Activated naive CD4-positive, alpha-beta T cell treated with anti-CD3 and anti-CD28 coated beads for 36 hours (primary cell): ENCODE measurements at regions of chr15 and their contacts with region 1.

Region 1: GRCh38 chr15:40108855-40109735 is at the start of gene BMF:
- DNase-seq: peak; percentile 98
- H3K4me3 Mint-ChIP-seq: peak within 1 kb of the TSS; percentile 84
- H3K27ac Mint-ChIP-seq: peak within 1 kb of the TSS; percentile 31
- H3K4me1 Mint-ChIP-seq: peaks cover 40% of the 10 kb centered on the region
- H3K27me3 Mint-ChIP-seq: no peaks in the 10 kb centered on the region
- total RNA-seq, gene BMF: 9.4 to 10.3 TPM

Region 2: GRCh38 chr15:39934397-39935071 is 174.6 kb before region 1 on chr15:
- CTCF ChIA-PET with region 1: no interaction called
- intact Hi-C with region 1: loop called (anchors 5 kb)
- DNase-seq: peak; percentile 8
- H3K4me3 Mint-ChIP-seq: peak overlapping the region; percentile 89
- H3K27ac Mint-ChIP-seq: peak overlapping the region; percentile 52
- H3K4me1 Mint-ChIP-seq: peaks cover 27% of the 10 kb centered on the region
- H3K27me3 Mint-ChIP-seq: no peaks in the 10 kb centered on the region

Region 3: GRCh38 chr15:40054605-40055545 is 54.2 kb before region 1 on chr15:
- CTCF ChIA-PET with region 1: interaction called, 181 read pairs
- intact Hi-C with region 1: no loop called
- DNase-seq: peak; percentile 67
- H3K4me3 Mint-ChIP-seq: no peak overlapping the region
- H3K27ac Mint-ChIP-seq: peak overlapping the region; percentile 54
- H3K4me1 Mint-ChIP-seq: peaks cover 55% of the 10 kb centered on the region
- H3K27me3 Mint-ChIP-seq: no peaks in the 10 kb centered on the region

Region 4: DNA sequence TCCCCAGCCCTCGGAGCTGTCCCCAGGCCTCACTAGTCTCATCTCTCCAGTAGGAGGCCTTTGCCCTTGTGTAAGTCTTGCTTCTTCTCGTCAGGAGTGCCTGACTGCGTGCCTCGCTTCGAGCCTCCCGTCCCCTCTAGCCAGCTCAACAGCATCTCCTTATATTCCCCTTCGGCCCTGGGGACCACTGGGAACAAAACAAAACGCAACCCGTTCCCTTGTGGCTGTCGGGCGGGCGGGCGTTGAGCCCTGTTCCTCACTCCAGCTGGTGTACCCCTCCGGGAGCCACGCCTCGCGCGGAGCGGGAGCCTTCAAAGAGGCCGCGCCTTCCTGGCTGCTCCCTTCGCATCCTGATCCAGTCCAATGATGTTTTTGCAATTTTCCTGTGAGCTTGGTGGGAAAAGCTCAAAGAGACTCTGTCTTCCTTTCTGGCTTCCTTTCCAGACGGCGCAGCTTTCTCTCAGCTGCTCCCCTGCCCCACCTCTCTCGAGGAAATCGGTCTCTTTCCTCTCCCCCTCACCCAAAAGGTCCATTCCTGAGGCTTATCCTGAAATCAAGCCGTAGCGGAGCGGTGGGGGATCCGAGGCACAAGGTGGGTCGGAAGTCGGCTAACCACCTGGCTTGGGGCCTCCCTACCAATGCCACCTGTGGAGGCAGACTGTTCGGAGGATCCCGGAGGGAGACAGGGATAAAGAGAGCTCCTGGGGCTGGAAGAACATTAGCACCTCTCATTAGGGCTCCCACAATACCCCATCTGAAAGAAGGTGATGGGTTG is 36.7 kb before region 1 on chr15:
- CTCF ChIA-PET with region 1: interaction called, 10 read pairs
- intact Hi-C with region 1: no loop called
- DNase-seq: no peak
- H3K4me3 Mint-ChIP-seq: no peak overlapping the region
- H3K27ac Mint-ChIP-seq: no peak overlapping the region
- H3K4me1 Mint-ChIP-seq: peaks cover 13% of the 10 kb centered on the region
- H3K27me3 Mint-ChIP-seq: peaks cover 6% of the 10 kb centered on the region

Region 5: DNA sequence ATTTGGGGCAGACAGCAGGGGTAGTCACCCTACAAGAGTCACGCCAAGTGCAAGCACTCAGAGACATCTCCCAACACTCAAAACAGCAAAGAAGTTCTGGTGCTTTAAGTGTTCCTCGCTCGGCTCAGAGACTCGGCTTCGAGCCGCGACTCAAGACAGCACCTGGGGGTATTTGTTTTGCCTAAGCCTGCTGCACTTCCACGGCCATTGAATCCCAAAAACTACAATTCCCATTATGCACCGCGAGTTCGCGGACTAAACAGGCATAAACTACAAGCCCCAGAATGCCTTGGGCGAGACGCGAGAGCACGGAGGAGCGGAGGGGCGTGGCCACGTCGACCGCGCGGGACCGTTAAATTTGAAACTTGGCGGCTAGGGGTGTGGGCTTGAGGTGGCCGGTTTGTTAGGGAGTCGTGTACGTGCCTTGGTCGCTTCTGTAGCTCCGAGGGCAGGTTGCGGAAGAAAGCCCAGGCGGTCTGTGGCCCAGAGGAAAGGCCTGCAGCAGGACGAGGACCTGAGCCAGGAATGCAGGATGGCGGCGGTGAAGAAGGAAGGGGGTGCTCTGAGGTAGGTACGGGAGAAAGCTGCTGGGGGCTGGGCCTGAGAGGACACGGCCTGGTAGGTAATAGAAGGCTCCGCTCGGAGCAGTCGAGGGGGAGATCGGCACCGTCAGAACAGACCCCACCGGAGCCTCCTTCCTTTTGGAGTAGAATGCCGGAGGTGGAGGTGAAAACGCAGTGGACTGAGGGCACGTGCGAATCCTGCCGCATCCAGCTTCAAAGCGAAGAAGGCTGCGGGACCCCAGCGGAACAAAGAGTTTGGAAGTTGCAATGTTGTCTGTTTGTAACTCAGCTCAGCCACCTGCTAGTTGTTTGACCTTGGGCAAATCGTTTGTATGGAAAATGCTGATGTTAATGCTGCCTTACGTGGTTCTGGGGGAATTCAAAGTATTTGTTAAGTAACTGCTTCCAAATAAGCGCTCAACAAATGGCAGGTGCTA is 51.9 kb after region 1 on chr15 and contains the start of gene BUB1B:
- CTCF ChIA-PET with region 1: interaction called, 18 read pairs
- intact Hi-C with region 1: loop called (anchors 1 kb)
- DNase-seq: peak; percentile 96
- H3K4me3 Mint-ChIP-seq: no peak within 1 kb of the TSS
- H3K27ac Mint-ChIP-seq: no peak within 1 kb of the TSS
- H3K4me1 Mint-ChIP-seq: peaks cover 6% of the 10 kb centered on the region
- H3K27me3 Mint-ChIP-seq: no peaks in the 10 kb centered on the region
- total RNA-seq, gene BUB1B: 102 to 106 TPM